SK-N-SH (cell line): ENCODE measurements at regions of chr11 and their contacts with region 1.

Region 1: GRCh38 chr11:2912498-2912897 is 16.7 kb downstream of the PHLDA2 start:
- DNase-seq: peak; percentile 67
- H3K4me3 ChIP-seq: no peak overlapping the region
- H3K27ac ChIP-seq: peak overlapping the region in 1 of 2 experiments; percentile 55; a peak in 1 of 4 replicates
- H3K4me1 ChIP-seq: peaks cover 17 to 25% of the 10 kb centered on the region in 2 experiments; a peak in 3 of 4 replicates
- H3K27me3 ChIP-seq: no peaks in the 10 kb centered on the region
- CTCF ChIP-seq: no peak
- EP300 ChIP-seq: no peak
- RAD21 ChIP-seq: no peak

Region 2: GRCh38 chr11:2892215-2893020 is 20.1 kb before region 1 on chr11:
- CTCF ChIA-PET with region 1: interaction called, 10 read pairs
- POLR2A ChIA-PET with region 1: no interaction called
- DNase-seq: peak; percentile 92
- H3K4me3 ChIP-seq: peak overlapping the region; percentile 23 to 39; a peak in 2 of 4 replicates
- H3K27ac ChIP-seq: no peak overlapping the region
- H3K4me1 ChIP-seq: peaks cover 0 to 14% of the 10 kb centered on the region in 2 experiments; a peak in 1 of 4 replicates
- H3K27me3 ChIP-seq: no peaks in the 10 kb centered on the region
- CTCF ChIP-seq: peak; percentile 88
- EP300 ChIP-seq: no peak
- RAD21 ChIP-seq: peak; percentile 77

Region 3: DNA sequence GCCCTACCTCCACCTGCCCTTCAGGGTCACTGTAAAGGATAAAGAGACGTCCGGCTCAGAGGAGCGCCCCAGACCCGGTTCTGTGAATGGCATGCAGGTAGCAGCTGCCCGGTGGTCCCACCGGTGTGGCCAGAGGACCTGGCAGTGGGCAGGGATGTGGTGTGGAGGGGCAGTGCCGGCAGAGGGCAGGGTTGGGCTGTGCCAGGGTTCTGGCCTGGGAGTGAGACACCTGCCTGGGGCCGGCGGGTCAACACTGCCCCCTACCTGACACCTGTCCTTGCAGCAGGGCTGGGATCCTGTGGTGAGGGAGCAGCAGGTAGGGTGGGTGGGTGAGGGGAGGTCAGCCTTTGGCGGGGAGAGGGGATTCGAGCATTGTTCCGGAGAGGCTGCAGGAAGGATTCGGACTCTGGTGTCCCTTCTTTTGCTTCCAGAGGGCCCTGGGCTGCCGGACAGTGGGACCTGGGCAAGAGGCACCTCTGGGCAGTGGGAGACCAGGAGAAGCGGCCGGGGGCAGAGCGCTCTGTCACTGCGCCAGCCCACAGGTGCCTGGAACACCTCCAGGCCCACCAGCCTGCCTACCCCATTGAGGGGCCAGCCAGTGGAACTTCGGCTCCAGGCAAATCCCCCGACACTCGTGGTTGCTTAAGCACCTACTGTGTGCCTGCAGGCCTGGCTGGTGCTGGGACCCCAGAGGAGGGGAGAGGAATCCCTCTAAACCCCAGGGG is 18.4 kb after region 1 on chr11:
- CTCF ChIA-PET with region 1: interaction called, 27 read pairs
- POLR2A ChIA-PET with region 1: no interaction called
- DNase-seq: peak; percentile 84
- H3K4me3 ChIP-seq: peak overlapping the region; percentile 46 to 66; a peak in 3 of 4 replicates
- H3K27ac ChIP-seq: peak overlapping the region in 1 of 2 experiments; percentile 60; a peak in 1 of 4 replicates
- H3K4me1 ChIP-seq: peaks cover 0 to 14% of the 10 kb centered on the region in 2 experiments; a peak in 2 of 4 replicates
- H3K27me3 ChIP-seq: no peaks in the 10 kb centered on the region
- CTCF ChIP-seq: peak; percentile 55
- EP300 ChIP-seq: no peak
- RAD21 ChIP-seq: peak; percentile 69